CD8-positive, alpha-beta T cell (primary cell): ENCODE measurements at regions of chr5 and their contacts with region 1.

Region 1: DNA sequence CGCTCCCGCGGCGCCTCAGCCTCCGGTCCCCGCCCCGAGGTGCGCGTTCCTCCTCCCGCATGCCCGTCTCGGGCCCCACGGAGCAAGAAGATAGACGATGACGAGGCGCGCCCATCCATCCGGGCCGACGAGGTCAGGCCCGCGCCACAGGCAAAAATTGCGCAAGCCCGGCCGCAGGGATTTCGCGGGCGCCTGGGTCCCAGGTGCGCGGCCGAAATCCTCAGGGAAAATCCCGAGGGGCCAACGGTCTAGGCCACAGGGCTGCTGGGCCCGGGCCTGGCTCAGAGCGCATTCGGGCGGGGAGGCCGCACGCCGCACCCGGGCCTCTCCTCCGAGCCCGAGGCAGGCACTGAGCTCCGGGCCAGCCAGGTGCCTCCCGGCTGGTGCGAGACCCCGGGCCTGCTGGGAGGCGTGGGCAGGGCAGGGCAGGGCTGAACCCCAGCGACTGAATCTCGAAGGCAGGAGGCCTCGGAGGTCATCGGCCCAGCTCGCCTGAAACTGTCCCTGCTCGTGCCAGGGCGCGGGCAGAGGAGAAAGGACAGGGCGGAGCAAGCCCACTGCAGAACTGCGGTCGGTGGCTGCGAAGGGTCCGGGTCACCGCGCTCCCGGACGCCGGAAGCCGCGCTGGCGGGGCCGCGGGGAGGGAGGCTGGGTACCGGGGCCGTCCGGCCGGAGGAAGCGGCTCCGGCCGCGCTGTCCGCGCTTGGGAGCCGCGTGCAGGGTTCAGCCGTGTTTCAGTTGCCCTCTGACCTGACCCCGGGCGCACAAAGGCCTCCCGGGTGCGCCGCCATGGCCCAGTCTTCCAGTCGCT is 66.8 kb downstream of the FOXD1 start:
- DNase-seq: peak in 3 of 9 experiments; percentile 14 to 20 (median 19)
- ATAC-seq: peak; percentile 20
- H3K4me3 ChIP-seq: no peak overlapping the region
- H3K4me3 Mint-ChIP-seq: peak overlapping the region; percentile 59
- H3K27ac ChIP-seq: no peak overlapping the region
- H3K27ac Mint-ChIP-seq: no peak overlapping the region
- H3K4me1 ChIP-seq: peaks cover 37% of the 10 kb centered on the region
- H3K4me1 Mint-ChIP-seq: peaks cover 28% of the 10 kb centered on the region
- H3K27me3 ChIP-seq: peaks cover 31 to 40% of the 10 kb centered on the region in 2 experiments
- H3K27me3 Mint-ChIP-seq: peaks cover 57% of the 10 kb centered on the region
- CTCF ChIP-seq: no peak

Region 2: GRCh38 chr5:73215891-73216610 is 165.7 kb before region 1 on chr5:
- CTCF ChIA-PET with region 1: no interaction called
- POLR2A ChIA-PET with region 1: no interaction called
- intact Hi-C with region 1: loop called in 1 of 2 experiments (anchors 5 kb)
- DNase-seq: peak; percentile 36 to 77 (median 56)
- ATAC-seq: peak; percentile 95
- H3K4me3 ChIP-seq: peak overlapping the region; percentile 13 to 39
- H3K4me3 Mint-ChIP-seq: peak overlapping the region; percentile 69
- H3K27ac ChIP-seq: no peak overlapping the region
- H3K27ac Mint-ChIP-seq: no peak overlapping the region
- H3K4me1 ChIP-seq: peaks cover 9% of the 10 kb centered on the region
- H3K4me1 Mint-ChIP-seq: peaks cover 11% of the 10 kb centered on the region
- H3K27me3 ChIP-seq: peaks cover 15 to 27% of the 10 kb centered on the region in 2 experiments
- H3K27me3 Mint-ChIP-seq: peaks cover 76% of the 10 kb centered on the region
- CTCF ChIP-seq: peak; percentile 65

Region 3: GRCh38 chr5:73405691-73406090 is 23.9 kb after region 1 on chr5:
- CTCF ChIA-PET with region 1: no interaction called
- POLR2A ChIA-PET with region 1: no interaction called
- intact Hi-C with region 1: no loop called
- DNase-seq: no peak
- ATAC-seq: no peak
- H3K4me3 ChIP-seq: no peak overlapping the region
- H3K4me3 Mint-ChIP-seq: no peak overlapping the region
- H3K27ac ChIP-seq: no peak overlapping the region
- H3K27ac Mint-ChIP-seq: no peak overlapping the region
- H3K4me1 ChIP-seq: no peaks in the 10 kb centered on the region
- H3K4me1 Mint-ChIP-seq: peaks cover 4% of the 10 kb centered on the region
- H3K27me3 ChIP-seq: no peaks in the 10 kb centered on the region
- H3K27me3 Mint-ChIP-seq: peaks cover 21% of the 10 kb centered on the region
- CTCF ChIP-seq: no peak